Activated naive CD4-positive, alpha-beta T cell treated with anti-CD3 and anti-CD28 coated beads for 36 hours (primary cell): ENCODE measurements at regions of chr9 and their contacts with region 1.

Region 1: DNA sequence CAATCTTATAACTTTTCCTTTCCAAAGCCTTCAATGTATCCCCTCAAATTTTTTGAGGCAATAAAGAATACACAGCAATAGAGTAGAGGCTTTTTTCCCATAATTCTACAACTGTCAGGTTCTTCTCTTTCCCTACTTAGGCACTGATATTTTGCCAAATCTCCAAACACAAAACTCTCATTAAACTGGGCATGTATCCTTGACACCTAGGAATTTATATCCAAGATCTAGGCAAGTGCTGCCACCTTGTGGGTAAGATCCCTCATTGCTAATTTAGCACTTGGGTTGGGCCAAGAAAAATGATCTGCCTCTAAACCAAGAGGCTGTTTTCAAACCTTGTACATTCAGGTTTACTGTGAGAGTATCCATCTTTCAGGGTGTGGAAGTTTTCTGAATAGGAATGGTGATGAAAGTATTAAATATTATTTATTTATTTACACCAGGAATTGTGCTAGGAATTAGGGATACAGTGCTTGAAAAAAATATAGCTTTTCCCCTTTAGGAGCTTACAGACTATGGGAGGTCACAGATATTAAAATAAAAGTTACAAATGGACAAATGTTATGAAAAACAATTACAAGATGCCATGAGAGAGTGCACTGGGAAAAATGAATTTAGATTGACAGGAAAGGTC is 17.6 kb downstream of the TSTD2 start:
- DNase-seq: peak; percentile 79
- H3K4me3 Mint-ChIP-seq: no peak overlapping the region
- H3K27ac Mint-ChIP-seq: no peak overlapping the region
- H3K4me1 Mint-ChIP-seq: peaks cover 15% of the 10 kb centered on the region
- H3K27me3 Mint-ChIP-seq: no peaks in the 10 kb centered on the region

Region 2: DNA sequence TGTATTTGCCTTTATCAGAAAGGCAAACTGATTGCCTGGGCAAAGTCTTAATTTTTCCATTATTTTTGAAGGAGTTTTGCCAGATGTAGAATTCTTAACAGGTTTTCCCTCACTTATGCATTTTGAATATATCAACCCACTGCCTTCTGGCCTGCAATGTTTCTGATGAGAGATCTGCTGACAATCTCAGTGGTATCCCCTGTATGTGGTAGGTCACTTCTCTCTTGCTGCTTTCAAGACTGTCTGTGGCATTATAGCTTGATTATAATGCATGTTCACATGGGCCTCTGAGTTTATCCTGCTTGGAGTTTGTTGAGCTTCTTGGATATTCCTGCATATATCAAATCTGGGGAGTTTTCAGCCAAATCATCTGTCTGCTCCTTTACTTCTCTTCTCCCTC is 1083.4 kb before region 1 on chr9:
- CTCF ChIA-PET with region 1: no interaction called
- intact Hi-C with region 1: no loop called
- DNase-seq: no peak
- H3K4me3 Mint-ChIP-seq: no peak overlapping the region
- H3K27ac Mint-ChIP-seq: no peak overlapping the region
- H3K4me1 Mint-ChIP-seq: no peaks in the 10 kb centered on the region
- H3K27me3 Mint-ChIP-seq: no peaks in the 10 kb centered on the region

Region 3: DNA sequence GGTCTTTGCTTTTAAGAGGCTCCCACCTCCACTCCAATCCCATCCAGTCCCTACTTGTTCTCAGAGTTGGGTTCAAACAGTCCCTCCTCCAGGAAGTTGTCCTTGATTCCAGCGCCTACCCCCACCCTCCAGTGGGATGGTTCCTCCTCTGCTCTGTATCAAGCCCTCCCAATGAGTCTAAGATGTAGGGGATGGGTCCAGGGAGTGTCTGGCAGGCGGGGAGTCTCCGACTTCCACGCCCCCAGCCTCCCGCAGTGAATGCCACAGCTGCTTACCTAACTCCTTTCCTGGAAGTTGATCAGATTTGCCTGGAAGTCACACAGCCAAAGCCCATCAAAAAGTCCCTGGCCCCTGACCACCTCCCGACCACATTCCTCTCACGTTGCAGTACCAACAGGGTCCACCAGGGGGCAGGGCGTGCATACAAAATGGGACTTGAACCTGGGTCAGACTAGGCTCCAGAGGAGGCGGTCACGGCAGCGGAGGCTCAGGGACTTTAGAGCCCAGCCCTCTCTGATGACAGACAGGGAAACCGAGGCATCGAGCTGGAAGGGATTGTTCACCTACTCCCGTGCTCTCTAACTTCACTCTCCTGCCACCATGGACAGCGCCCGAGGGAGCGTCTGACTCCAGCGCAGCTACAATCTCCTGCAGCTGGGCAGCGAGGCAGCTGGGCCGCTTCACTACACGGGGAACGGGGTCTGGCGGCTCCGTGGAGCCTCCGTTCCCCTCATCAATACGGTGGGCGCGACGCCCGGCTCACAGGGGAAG is 228.6 kb before region 1 on chr9:
- CTCF ChIA-PET with region 1: interaction called, 10 read pairs
- intact Hi-C with region 1: loop called (anchors 1 kb)
- DNase-seq: peak; percentile 86
- H3K4me3 Mint-ChIP-seq: no peak overlapping the region
- H3K27ac Mint-ChIP-seq: no peak overlapping the region
- H3K4me1 Mint-ChIP-seq: peaks cover 19% of the 10 kb centered on the region
- H3K27me3 Mint-ChIP-seq: peaks cover 14% of the 10 kb centered on the region

Region 4: GRCh38 chr9:97411789-97412625 is 203.5 kb before region 1 on chr9 and contains the start of gene TDRD7:
- CTCF ChIA-PET with region 1: interaction called, 9 read pairs
- intact Hi-C with region 1: loop called (anchors 1 kb)
- DNase-seq: peak; percentile 85
- H3K4me3 Mint-ChIP-seq: peak within 1 kb of the TSS; percentile 79
- H3K27ac Mint-ChIP-seq: peak within 1 kb of the TSS; percentile 44
- H3K4me1 Mint-ChIP-seq: peaks cover 13% of the 10 kb centered on the region
- H3K27me3 Mint-ChIP-seq: peaks cover 9% of the 10 kb centered on the region
- total RNA-seq, gene TDRD7: 6.9 to 7.4 TPM

Region 5: DNA sequence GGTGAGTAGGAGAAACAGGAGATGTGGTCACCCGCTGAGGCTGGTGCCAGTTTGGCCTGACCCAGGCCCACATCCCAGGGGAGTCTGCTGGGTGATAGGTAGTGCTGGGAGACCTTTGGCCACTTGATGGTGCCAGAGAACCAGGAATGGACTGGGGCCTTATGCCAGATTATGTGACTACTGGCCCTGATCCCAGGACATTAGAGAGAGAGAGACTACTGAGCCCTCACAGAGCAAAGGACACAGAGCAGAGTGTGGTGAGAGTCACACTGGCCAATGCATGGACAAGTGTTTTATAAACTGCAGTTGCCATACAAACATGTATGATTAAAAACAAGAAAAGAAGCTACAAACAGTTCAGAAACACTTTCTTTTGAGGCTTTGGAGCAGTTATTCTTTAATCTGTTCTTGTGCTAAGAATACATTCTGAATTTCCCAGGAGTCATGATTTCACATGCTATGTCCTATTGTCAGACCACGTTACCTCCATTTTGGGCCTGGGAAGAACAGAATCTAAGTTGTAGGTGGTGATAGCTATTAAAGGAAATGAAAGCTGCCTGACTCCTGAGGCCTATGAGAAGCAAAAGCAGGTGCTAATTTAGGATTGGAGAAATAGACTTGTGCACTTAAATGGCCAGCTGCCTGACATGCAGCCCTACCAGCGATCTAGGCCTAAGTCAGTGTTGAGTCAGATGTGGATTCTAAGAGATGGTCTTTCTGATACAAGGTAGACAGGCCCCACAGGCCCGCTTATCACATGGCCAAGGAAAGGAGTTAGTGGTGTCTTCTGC is 146.7 kb before region 1 on chr9:
- CTCF ChIA-PET with region 1: interaction called, 33 read pairs
- intact Hi-C with region 1: loop called (anchors 1 kb)
- DNase-seq: peak; percentile 65
- H3K4me3 Mint-ChIP-seq: no peak overlapping the region
- H3K27ac Mint-ChIP-seq: no peak overlapping the region
- H3K4me1 Mint-ChIP-seq: no peaks in the 10 kb centered on the region
- H3K27me3 Mint-ChIP-seq: no peaks in the 10 kb centered on the region

Region 6: GRCh38 chr9:97475059-97475458 is 140.5 kb before region 1 on chr9:
- CTCF ChIA-PET with region 1: interaction called, 33 read pairs
- intact Hi-C with region 1: no loop called
- DNase-seq: no peak
- H3K4me3 Mint-ChIP-seq: no peak overlapping the region
- H3K27ac Mint-ChIP-seq: no peak overlapping the region
- H3K4me1 Mint-ChIP-seq: no peaks in the 10 kb centered on the region
- H3K27me3 Mint-ChIP-seq: no peaks in the 10 kb centered on the region

Region 7: GRCh38 chr9:97598461-97599288 is 16.9 kb before region 1 on chr9:
- CTCF ChIA-PET with region 1: interaction called, 26 read pairs
- intact Hi-C with region 1: no loop called
- DNase-seq: peak; percentile 87
- H3K4me3 Mint-ChIP-seq: no peak overlapping the region
- H3K27ac Mint-ChIP-seq: no peak overlapping the region
- H3K4me1 Mint-ChIP-seq: peaks cover 4% of the 10 kb centered on the region
- H3K27me3 Mint-ChIP-seq: no peaks in the 10 kb centered on the region

Region 8: DNA sequence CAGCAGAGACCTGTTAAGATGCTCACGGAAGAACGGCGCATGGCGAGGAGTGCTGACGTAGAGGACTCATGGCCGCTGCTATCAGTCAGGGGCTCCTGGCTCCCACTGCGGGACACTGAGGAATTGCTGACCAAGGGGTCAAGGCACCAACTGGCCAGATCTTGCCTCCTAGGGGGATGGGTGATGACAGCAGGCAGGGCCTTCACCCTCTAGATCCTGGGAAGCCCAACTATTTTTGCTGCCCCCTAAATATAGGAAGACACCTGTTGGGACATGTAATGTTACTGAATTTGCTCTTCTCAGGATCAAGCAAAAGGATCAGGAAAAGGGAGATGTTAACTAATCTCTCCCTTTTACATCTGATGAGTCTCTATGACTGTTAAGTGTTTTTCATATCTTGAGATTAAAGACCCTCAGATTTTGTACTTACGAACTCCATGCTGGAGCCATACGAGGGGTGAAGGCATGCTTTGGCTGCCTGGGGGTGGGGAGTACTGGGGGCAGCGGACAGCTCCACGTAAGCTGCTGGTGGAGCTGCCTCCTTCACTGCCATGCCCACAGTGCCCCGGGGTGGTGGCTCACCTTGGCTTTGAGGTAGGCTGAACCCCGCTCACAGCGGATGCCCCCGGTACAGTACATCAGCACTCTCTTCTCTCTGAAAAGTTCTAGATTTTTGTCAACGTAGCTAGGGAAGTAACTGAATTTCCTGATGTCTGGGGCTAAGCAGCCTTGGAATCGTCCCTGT is 10.5 kb before region 1 on chr9:
- CTCF ChIA-PET with region 1: interaction called, 20 read pairs
- intact Hi-C with region 1: no loop called
- DNase-seq: no peak
- H3K4me3 Mint-ChIP-seq: no peak overlapping the region
- H3K27ac Mint-ChIP-seq: no peak overlapping the region
- H3K4me1 Mint-ChIP-seq: no peaks in the 10 kb centered on the region
- H3K27me3 Mint-ChIP-seq: no peaks in the 10 kb centered on the region